Colonic mucosa (tissue), 4 donors: ENCODE measurements at regions of chr9 and their contacts with region 1.

Region 1: GRCh38 chr9:122904823-122905710 is at the start of gene RC3H2:
- DNase-seq: peak; percentile 99
- H3K4me3 ChIP-seq: peak within 1 kb of the TSS; percentile 94
- H3K27ac ChIP-seq: peak within 1 kb of the TSS; percentile 95
- H3K4me1 ChIP-seq: no peaks in the 10 kb centered on the region
- H3K27me3 ChIP-seq: no peaks in the 10 kb centered on the region
- CTCF ChIP-seq: no peak
- total RNA-seq, gene RC3H2: 34.4 to 44.9 TPM

Region 2: GRCh38 chr9:122996586-122996985 is 91.5 kb after region 1 on chr9:
- intact Hi-C with region 1: loop called (anchors 5 kb)
- DNase-seq: no peak
- H3K4me3 ChIP-seq: no peak overlapping the region
- H3K27ac ChIP-seq: no peak overlapping the region
- H3K4me1 ChIP-seq: no peaks in the 10 kb centered on the region
- H3K27me3 ChIP-seq: no peaks in the 10 kb centered on the region
- CTCF ChIP-seq: no peak

Region 3: GRCh38 chr9:123048748-123049147 is 143.7 kb after region 1 on chr9:
- intact Hi-C with region 1: no loop called
- DNase-seq: no peak
- H3K4me3 ChIP-seq: no peak overlapping the region
- H3K27ac ChIP-seq: peak overlapping the region; percentile 0
- H3K4me1 ChIP-seq: peaks cover 3% of the 10 kb centered on the region
- H3K27me3 ChIP-seq: no peaks in the 10 kb centered on the region
- CTCF ChIP-seq: no peak